Kidney (tissue), 22 donors: ENCODE measurements at regions of chr14 and their contacts with region 1.

Region 1: DNA sequence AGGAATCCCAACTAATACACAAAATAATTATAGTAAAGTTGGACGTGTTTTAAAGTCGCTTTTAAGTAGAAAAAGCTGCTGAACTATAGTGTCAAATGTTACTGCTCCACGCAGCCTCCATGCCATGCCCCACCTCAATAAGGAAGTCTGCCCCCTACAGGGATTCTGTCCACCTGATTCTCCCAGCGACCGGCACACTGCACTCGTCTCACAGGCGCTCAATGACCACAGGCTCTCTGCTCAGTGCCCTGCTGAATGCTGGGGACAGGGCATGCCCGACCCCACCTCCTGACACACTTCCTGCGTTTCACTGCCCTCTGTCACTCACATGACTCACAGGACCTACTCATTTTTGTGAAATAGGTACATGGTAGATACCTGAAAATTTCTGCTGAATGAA is 48.9 kb downstream of the BDKRB1 start:
- DNase-seq: no peak
- H3K4me3 ChIP-seq: no peak overlapping the region
- H3K27ac ChIP-seq: no peak overlapping the region
- H3K4me1 ChIP-seq: peaks cover 2 to 15% (median 4%) of the 10 kb centered on the region in 3 donors
- H3K27me3 ChIP-seq: no peaks in the 10 kb centered on the region
- CTCF ChIP-seq: no peak

Region 2: DNA sequence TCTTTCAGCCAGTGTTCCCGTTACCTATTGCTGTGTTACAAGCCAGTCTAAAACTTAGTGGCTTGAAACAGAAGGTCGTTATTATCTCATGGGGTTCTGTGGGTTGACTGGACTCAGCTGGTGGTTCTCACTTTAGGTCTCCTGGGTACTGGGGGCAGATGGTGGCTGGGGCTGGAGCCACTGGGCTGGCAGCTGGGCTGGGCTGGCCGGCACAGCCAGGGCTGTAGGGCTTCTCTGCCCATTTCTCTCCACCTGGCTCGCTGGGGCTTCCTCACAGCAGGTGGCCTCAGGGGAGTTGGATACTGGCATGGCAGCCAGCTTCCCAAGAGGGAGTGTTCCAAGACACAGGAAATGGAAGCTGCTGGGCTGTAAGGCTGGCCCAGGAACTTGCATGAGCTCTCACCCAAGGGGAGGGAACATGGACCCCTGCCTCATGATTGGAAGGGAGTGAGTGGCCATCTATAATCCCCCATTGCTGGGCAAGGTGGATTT is 401.3 kb before region 1 on chr14:
- intact Hi-C with region 1: no loop called
- DNase-seq: no peak
- H3K4me3 ChIP-seq: no peak overlapping the region
- H3K27ac ChIP-seq: no peak overlapping the region
- H3K4me1 ChIP-seq: no peaks in the 10 kb centered on the region
- H3K27me3 ChIP-seq: no peaks in the 10 kb centered on the region
- CTCF ChIP-seq: no peak

Region 3: GRCh38 chr14:96239759-96240158 is 65.2 kb before region 1 on chr14:
- intact Hi-C with region 1: no loop called
- DNase-seq: no peak
- H3K4me3 ChIP-seq: no peak overlapping the region
- H3K27ac ChIP-seq: no peak overlapping the region
- H3K4me1 ChIP-seq: no peaks in the 10 kb centered on the region
- H3K27me3 ChIP-seq: no peaks in the 10 kb centered on the region
- CTCF ChIP-seq: no peak

Region 4: GRCh38 chr14:96409701-96410100 is 104.7 kb after region 1 on chr14:
- intact Hi-C with region 1: loop called (anchors 10 kb)
- DNase-seq: no peak
- H3K4me3 ChIP-seq: no peak overlapping the region
- H3K27ac ChIP-seq: no peak overlapping the region
- H3K4me1 ChIP-seq: no peaks in the 10 kb centered on the region
- H3K27me3 ChIP-seq: no peaks in the 10 kb centered on the region
- CTCF ChIP-seq: no peak